AG04449 (cell line): ENCODE measurements at regions of chr10 and their contacts with region 1.

Region 1: GRCh38 chr10:88687853-88688467 is 18.1 kb upstream of the LIPK start:
- DNase-seq: no peak
- H3K4me3 ChIP-seq: no peak overlapping the region
- CTCF ChIP-seq: peak; percentile 55

Region 2: GRCh38 chr10:88582806-88583583 is 105.0 kb before region 1 on chr10 and contains the start of gene RNLS:
- CTCF ChIA-PET with region 1: interaction called, 13 read pairs
- POLR2A ChIA-PET with region 1: no interaction called
- DNase-seq: no peak
- H3K4me3 ChIP-seq: peak within 1 kb of the TSS; percentile 59
- CTCF ChIP-seq: peak; percentile 88

Region 3: GRCh38 chr10:88707429-88708285 is 19.7 kb after region 1 on chr10:
- CTCF ChIA-PET with region 1: interaction called, 20 read pairs
- POLR2A ChIA-PET with region 1: no interaction called
- DNase-seq: no peak
- H3K4me3 ChIP-seq: no peak overlapping the region
- CTCF ChIP-seq: no peak

Region 4: DNA sequence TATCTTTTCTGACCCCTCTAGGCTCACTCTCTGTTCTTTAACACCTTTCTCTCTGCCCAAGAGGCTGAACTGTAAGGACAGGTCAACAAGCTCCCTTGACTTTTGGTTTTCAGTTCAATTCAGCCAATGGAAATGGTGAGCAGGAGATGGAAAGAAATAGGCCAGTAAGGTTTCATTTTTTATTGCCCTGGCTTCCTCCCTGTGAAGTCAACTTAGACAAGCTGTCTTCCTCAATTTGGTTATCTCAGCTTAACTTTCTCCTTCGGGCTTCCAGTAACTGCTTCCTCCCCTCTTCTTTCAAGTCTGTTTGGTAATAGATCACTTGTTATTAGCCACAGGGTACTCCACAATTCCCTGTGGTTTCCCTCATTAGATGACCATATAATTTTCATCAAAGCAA is 37.8 kb after region 1 on chr10:
- CTCF ChIA-PET with region 1: no interaction called
- POLR2A ChIA-PET with region 1: no interaction called
- DNase-seq: no peak
- H3K4me3 ChIP-seq: no peak overlapping the region
- CTCF ChIP-seq: no peak

Region 5: DNA sequence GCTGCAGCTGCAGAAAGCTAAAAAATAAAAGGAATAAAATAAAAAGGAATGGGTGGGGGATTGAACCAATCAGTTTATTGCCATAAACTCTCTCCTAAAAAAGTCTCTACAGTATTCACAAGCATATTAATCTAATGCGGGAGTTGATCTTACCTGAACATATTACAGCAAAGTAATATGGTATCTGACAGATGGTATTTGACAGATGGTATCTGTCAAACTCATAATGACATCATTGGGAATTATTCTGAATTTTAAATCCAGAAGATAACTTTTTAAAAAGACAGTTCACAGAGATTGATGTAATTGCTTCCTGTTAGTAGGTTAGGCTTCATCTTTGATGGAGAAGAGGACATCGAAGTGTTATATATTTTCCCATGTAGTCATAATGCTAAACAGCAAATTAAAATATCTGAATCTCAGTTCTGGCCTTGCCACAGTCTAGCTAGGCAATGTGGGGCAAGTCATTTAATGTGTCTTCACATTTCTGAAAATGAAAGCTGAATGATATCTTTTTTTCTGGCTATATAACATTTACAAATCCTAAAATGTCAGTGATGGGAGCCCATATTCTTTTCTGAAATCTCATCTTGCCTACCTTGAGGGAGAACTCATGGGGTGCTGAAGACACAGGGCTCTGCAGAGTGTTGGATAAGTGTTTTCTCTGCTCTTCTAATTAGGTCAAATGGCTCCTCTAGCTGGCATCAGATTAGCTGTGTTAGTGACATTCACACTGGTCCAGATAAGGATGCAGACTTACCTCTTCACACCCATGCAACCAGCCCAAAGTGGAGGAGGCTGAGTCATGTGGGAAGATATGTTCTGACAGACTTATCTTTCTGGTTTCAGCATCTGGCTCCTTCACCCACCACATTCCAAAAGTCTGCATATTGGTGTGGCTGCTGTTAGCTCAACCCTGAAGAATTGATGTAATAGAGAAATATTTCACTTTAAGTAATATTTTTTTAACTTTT is 112.5 kb after region 1 on chr10:
- CTCF ChIA-PET with region 1: interaction called, 18 read pairs
- POLR2A ChIA-PET with region 1: no interaction called
- DNase-seq: peak; percentile 49
- H3K4me3 ChIP-seq: no peak overlapping the region
- CTCF ChIP-seq: no peak